GM10248 (cell line): ENCODE measurements at regions of chr16 and their contacts with region 1.

Region 1: GRCh38 chr16:30429678-30430427 is at the start of gene DCTPP1:
- DNase-seq: peak; percentile 95
- CTCF ChIP-seq: peak; percentile 90

Region 2: GRCh38 chr16:29790953-29791844 is 638.7 kb before region 1 on chr16:
- CTCF ChIA-PET with region 1: no interaction called
- POLR2A ChIA-PET with region 1: no interaction called
- DNase-seq: no peak
- CTCF ChIP-seq: no peak

Region 3: DNA sequence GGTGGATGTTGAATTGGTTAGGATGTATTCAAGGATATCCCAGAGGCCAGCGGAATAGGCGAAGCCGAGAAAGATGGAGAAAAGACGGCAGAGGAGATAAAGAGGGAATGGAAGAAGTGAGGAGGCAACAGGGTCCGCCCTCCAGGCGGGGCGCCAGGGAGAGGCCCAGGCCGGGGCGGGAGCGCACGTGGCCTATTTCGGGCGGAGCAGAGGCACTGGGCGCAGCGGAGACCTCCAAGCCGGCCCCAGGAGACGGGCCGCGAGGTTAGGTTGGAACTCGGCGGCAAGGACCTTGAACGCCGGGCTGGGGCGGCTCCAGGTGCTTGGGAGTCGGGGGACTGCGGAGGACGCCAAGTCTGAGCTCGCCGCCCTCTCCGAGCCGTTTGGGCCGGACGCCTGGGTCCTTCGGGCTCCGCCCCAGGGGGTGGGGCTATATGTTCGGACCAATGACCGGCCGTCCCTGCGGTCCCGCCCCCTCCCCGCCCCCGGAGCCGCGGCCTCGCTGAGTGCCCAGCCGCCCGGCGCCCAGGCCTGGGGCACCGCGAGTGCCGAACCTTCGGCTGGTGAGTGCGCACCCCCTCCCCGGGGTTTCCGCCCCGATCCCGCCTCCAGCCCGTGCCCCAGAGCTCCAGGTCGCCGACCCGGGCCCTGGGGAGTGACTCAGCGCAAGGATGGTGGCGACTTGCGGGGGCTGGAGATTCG is 22.6 kb before region 1 on chr16 and contains the start of gene ZNF771:
- CTCF ChIA-PET with region 1: interaction called, 13 read pairs
- POLR2A ChIA-PET with region 1: no interaction called
- DNase-seq: peak; percentile 93
- CTCF ChIP-seq: no peak

Region 4: DNA sequence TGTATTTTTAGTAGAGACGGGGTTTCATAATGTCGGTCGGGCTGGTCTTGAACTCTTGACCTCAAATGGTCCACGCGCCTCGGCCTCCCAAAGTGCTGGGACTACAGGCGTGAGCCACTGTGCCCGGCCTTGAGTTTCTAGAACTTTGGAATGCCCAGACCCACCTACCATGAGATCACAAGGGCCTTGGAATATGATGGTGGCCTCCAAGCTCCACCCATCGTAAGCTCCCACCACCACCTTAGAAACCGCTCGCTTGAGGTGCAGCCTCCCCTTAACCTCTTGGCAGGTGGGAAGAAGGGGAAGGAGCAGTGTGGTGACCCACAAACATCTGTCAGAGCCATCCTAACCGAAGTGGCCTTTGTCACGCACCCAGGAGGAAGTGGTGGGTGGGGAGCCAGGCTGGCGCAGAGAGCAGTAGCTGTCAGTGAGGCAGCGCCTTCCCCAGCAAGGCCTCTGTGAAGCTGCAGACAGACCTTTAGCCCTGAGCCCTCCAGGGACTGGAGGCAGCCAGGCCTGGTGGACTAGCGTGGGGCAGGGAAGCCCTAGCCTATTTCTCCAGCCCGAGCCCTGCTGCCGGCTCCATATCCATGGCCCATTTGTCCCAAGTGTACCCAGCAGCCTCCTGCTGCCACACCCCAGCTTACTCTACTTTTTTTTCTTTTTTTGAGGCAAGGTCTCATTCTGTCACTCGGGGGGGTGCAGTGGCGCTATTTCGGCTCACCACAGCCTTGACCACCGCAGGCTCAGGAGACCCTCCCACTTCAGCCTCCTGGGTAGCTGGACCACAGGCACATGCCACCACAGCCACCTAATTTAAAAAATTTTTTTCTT is 28.9 kb after region 1 on chr16:
- CTCF ChIA-PET with region 1: interaction called, 36 read pairs
- POLR2A ChIA-PET with region 1: no interaction called
- DNase-seq: peak; percentile 77
- CTCF ChIP-seq: no peak

Region 5: DNA sequence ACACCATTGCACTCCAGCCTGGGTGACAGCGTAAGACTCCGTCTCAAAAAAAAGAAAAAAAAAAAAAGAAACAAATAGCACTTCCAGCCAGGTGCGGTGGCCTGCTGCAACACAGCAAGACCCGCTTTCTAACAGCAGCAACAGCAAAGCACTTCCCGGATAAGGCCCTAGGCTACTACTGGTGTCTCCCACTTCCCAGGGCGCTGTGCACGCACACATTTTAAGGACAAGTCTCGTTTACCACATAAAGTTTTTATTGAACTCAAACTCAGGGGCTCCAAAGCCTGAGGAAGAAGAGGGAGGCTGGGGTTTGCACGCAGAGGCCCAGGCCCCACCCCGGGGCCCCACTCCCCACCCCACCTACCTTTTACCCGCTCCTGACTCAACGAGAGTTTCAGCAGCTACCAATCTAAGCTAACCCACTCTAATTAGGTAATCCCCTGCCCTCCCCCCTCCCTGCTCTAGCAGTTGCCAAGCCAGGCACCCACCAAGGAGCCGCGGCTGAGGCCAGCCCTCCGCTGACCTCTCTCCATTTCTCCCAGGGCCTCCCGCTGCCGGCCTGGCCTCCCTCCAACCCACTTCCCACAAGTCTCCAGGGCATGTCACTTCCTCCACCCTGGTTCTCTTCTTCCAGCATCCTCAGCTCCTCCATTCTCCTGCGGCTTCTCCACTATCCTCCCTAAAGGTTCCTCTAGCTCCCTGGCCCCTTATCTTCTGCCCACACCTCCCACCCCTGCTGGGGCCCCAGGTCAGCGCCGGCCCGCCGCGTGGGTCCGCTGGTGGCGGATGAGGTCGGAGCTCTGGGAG is 94.1 kb after region 1 on chr16:
- CTCF ChIA-PET with region 1: interaction called, 11 read pairs
- POLR2A ChIA-PET with region 1: no interaction called
- DNase-seq: no peak
- CTCF ChIP-seq: no peak

Region 6: GRCh38 chr16:30602616-30603277 is 172.9 kb after region 1 on chr16:
- CTCF ChIA-PET with region 1: interaction called, 45 read pairs
- POLR2A ChIA-PET with region 1: no interaction called
- DNase-seq: no peak
- CTCF ChIP-seq: no peak

Region 7: DNA sequence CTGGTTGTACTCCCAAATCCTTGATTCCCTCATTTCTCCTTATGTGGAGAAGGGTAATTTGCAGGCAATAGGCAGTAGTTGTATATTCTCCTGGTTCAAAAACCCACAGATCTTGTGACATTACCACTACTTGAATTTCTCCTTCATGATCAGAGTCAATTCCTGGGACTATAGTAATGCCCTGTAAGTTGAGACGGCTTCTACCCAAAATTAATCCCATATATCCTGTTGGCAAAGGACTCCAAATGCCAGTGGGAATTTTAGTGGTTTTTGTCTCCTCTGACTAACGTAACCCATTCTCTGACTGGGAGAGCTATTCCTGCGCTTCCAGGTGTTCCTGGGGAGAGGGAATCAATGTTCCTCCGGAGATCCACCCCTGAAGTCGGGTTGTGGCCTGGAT is 191.9 kb after region 1 on chr16:
- CTCF ChIA-PET with region 1: interaction called, 24 read pairs
- POLR2A ChIA-PET with region 1: no interaction called
- DNase-seq: no peak
- CTCF ChIP-seq: no peak

Region 8: DNA sequence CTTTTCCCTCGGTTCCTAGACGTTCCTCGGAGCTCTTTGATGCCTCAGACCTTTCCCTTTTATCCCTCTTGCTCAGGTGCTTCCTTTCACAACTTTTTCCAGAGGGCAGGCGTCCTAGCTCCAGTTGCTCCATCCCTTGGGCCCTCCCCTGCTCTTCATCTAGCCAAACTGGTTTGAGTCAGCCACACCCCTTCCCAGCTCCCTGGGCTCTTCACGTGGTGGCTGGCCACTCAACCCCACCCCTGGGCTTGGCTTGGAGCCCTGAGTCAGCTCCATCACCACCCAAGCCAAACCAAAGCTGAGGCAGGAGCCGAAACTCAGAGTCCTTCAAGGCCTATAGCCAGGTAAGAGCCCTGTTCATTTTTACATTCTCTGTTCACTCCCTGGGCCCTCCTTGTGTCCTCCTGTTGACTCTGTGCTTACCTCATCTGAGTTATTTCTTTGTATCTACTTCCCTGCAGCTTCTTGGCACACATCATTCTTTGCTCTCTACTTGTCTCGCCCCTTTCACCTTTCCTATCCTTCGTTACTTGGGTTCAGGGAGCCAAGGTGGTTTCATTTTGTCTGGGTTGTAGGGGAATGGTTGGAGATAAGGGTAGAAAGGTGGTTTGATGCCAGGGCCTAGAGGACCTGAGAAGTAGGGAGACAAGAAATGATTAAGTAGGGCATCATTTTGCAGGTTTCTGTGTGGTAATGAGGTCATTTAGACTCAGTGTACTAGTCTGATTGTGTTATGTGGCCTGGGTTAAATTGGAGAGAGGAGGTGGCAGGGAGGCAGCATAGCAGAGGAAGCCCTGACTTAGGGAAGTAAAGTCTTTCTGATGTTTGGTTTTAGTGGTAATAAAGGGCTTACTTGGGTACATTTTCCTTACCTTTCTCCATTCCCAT is 310.8 kb after region 1 on chr16:
- CTCF ChIA-PET with region 1: no interaction called
- POLR2A ChIA-PET with region 1: no interaction called
- DNase-seq: no peak
- CTCF ChIP-seq: no peak